ENCODE measurements at regions of chr1 and their contacts with region 1.

Region 1: DNA sequence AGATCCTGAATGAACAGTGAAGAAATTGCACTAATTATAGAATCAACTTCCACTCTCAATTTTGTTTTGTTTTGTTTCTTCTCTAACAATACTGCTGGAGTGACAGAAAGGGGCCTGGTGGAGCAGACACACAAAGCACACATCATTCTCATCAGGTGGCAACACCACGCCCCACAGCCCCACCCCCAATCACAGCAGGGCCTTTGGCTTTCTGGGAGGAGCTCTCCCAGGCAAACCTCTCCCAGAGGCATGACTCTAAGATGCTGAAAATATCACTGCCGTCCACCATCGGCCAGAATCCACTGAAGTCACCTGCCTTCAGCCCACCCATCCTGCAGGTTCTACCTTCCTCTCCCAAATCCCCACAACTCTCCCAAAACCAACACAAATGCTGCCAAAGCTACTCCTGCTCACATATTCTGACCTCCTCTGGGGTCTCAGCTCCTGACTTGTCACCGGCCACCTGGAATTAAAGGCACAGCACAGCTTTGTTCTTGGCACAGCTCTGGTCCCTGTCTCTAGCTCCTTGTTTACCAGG is 120.7 kb downstream of the GRIK3 start:
- DNase-seq: no peak
- H3K4me3 ChIP-seq: no peak overlapping the region
- H3K27ac ChIP-seq: no peak overlapping the region
- H3K4me1 ChIP-seq: no peaks in the 10 kb centered on the region
- H3K27me3 ChIP-seq: no peaks in the 10 kb centered on the region
- CTCF ChIP-seq: no peak

Region 2: DNA sequence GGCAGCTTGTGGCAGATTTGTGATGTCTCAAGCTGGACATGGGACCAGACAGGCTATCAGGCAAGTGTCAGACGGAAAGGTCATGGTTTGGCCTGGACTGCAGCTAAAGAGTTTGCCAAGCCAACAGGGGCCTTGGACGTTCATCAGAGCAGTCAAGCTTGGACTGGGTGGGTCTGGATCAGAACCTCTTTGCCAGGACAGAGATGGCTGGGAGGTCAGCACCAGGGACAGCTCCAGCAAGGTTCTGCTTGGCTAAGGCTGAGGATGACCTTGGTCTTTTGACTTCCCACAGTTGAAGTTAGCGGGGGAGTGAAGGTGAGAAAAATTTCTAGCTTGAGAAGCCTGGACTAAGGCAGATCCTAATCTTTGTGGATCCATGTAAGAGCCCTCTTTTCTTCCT is 52.6 kb after region 1 on chr1:
- CTCF ChIA-PET with region 1: no interaction called
- dilution Hi-C with region 1: loop called (anchors 5 kb)
- in situ Hi-C with region 1: no loop called
- intact Hi-C with region 1: no loop called
- DNase-seq: no peak
- H3K4me3 ChIP-seq: no peak overlapping the region
- H3K27ac ChIP-seq: no peak overlapping the region
- H3K4me1 ChIP-seq: no peaks in the 10 kb centered on the region
- H3K27me3 ChIP-seq: no peaks in the 10 kb centered on the region
- CTCF ChIP-seq: no peak

Region 3: DNA sequence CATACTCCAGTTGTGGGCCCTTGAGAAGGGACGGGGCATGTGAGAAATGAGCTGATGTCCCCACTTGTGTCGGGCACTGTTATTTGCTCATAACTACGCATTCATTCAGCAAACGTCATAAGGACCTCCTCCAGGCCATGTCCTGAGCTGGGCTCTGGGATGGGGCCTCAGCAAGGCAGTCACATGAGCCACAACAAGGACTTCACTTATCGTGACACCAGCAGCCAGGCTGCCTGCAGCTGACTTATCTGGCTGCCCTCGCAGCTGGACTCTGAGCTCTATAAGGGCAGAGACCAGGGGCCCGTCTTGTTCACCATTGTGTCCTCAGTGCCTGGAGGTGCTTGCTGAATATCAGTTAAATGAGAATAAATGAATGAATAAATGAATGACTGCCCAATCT is 158.2 kb after region 1 on chr1:
- CTCF ChIA-PET with region 1: no interaction called
- dilution Hi-C with region 1: no loop called
- in situ Hi-C with region 1: no loop called
- intact Hi-C with region 1: no loop called
- DNase-seq: no peak
- H3K4me3 ChIP-seq: no peak overlapping the region
- H3K27ac ChIP-seq: no peak overlapping the region
- H3K4me1 ChIP-seq: no peaks in the 10 kb centered on the region
- H3K27me3 ChIP-seq: peaks cover 2% of the 10 kb centered on the region
- CTCF ChIP-seq: no peak